GM18951 (cell line): ENCODE measurements at regions of chr3 and their contacts with region 1.

Region 1: GRCh38 chr3:115819785-115820384 is 196.6 kb downstream of the GAP43 start:
- POLR2A ChIP-seq: no peak

Region 2: GRCh38 chr3:115092220-115092791 is 727.6 kb before region 1 on chr3:
- in situ Hi-C with region 1: loop called (anchors 25 kb)
- POLR2A ChIP-seq: no peak